Endothelial cell of umbilical vein (primary cell): ENCODE measurements at regions of chr19 and their contacts with region 1.

Region 1: DNA sequence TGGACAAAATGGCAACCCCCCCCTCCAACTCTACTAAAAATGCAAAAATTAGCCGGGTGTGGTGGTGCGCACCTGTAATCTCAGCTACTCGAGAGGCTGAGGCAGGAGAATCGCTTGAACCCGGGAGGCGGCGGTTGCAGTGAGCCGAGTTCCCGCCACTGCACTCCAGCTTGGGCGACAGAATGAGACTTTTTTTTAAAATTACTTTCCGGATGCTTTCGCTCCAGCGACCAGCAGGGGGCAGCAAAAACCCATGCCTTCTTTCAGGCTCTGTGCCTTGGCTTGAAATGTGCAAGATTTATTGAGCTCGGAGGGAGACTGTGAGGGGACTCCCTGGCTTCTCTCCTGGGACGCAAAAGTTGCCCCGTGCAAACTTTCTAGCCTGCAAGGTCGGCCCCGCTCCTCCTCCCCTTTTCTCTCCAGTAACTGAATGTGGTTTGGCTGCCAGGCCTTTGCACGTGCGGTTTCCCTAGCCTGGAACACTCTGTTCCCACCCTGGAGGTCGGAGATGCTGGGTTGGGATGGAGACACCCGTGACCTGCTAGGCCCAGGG is 61.4 kb upstream of the NFIC start:
- DNase-seq: peak; percentile 71
- H3K4me3 ChIP-seq: no peak overlapping the region
- H3K27ac ChIP-seq: no peak overlapping the region
- H3K4me1 ChIP-seq: no peaks in the 10 kb centered on the region
- H3K27me3 ChIP-seq: no peaks in the 10 kb centered on the region
- CTCF ChIP-seq: peak; percentile 66 to 77
- POLR2A ChIP-seq: no peak

Region 2: GRCh38 chr19:3289971-3290569 is 14.9 kb before region 1 on chr19:
- CTCF ChIA-PET with region 1: interaction called, 26 read pairs
- POLR2A ChIA-PET with region 1: no interaction called
- dilution Hi-C with region 1: no loop called
- intact Hi-C with region 1: no loop called
- DNase-seq: no peak
- H3K4me3 ChIP-seq: no peak overlapping the region
- H3K27ac ChIP-seq: no peak overlapping the region
- H3K4me1 ChIP-seq: no peaks in the 10 kb centered on the region
- H3K27me3 ChIP-seq: peaks cover 0 to 7% of the 10 kb centered on the region in 2 experiments
- CTCF ChIP-seq: no peak
- POLR2A ChIP-seq: no peak

Region 3: DNA sequence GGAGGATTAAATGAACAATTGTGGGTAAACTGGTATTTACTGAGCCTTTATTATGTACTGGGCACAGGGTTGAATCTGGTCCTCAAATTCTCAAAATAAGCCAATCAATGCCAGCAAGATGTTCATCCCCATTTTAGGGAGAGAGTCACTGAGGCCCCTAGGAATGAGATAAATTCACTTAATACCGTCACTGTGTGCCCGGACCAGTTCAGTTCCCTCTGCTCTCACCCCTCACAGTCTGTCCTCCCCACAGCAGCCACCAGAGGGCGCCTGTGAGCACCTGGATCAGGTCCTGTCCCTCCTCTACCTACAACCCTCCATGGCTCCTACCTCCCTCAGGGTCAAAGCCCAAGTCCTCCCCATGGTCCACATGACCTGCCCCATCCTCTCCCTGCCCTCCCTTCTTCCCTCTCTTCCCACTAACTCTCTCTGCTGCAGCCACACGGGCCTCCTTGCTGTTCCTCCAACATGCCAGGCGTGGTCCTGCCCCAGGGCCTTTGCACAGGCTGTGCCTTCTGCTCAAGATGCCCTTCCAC is 19.4 kb after region 1 on chr19:
- CTCF ChIA-PET with region 1: interaction called, 14 read pairs
- POLR2A ChIA-PET with region 1: no interaction called
- dilution Hi-C with region 1: no loop called
- intact Hi-C with region 1: no loop called
- DNase-seq: peak; percentile 30
- H3K4me3 ChIP-seq: no peak overlapping the region
- H3K27ac ChIP-seq: no peak overlapping the region
- H3K4me1 ChIP-seq: no peaks in the 10 kb centered on the region
- H3K27me3 ChIP-seq: peaks cover 0 to 1% of the 10 kb centered on the region in 2 experiments
- CTCF ChIP-seq: peak; percentile 78 to 84
- POLR2A ChIP-seq: no peak

Region 4: GRCh38 chr19:3479177-3479833 is 174.4 kb after region 1 on chr19:
- CTCF ChIA-PET with region 1: interaction called, 147 read pairs
- POLR2A ChIA-PET with region 1: no interaction called
- dilution Hi-C with region 1: no loop called
- intact Hi-C with region 1: loop called (anchors 5 kb)
- DNase-seq: no peak
- H3K4me3 ChIP-seq: no peak overlapping the region
- H3K27ac ChIP-seq: no peak overlapping the region
- H3K4me1 ChIP-seq: no peaks in the 10 kb centered on the region
- H3K27me3 ChIP-seq: peaks cover 3 to 11% of the 10 kb centered on the region in 2 experiments
- CTCF ChIP-seq: no peak
- POLR2A ChIP-seq: no peak